B cell (primary cell): ENCODE measurements at regions of chr17 and their contacts with region 1.

Region 1: DNA sequence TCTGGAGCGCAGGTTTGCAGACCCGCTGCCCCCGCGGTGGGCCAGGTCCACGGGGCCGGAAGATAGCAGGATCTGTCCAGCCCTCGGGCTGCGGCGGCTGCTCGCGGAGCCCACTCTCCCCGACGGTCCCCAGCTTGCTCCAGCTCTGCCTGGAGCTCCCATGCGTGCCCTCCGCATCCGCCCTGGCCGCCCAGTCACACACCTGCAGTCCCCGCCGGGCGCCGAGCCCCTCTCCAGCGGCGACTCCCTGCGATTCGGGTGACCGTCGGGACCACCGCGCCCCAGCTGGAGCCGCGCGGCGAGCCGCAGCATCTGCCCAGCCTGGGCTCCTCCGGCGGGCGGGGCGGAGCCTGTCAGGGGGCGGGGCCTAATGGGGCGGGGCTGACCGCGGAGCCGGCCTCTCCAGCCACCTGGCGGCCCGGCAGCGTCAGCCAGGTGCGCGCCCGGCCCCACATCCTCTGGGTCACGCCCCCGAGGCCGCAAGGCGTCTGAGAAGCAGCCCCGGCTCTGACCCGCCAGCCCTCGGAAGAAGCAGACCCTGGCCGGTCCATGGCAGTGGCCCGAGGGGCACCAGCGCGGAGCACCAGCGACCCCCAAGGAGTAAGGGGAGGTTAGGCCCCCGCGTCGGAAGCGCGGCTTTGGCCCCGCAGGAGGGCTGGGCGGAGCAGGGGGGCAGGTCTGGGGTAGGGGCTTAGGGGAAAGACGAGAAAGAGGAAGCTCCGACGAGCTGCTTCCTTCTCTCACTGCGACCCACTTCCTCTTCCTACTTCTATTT is at the start of gene PIK3R5:
- DNase-seq: peak; percentile 98
- ATAC-seq: peak; percentile 90
- H3K4me3 ChIP-seq: peak within 1 kb of the TSS; percentile 59 to 93 (median 84)
- H3K4me3 Mint-ChIP-seq: peak within 1 kb of the TSS; percentile 95
- H3K27ac ChIP-seq: peak within 1 kb of the TSS; percentile 93 to 97
- H3K27ac Mint-ChIP-seq: peak within 1 kb of the TSS; percentile 94
- H3K4me1 ChIP-seq: peaks cover 43 to 56% of the 10 kb centered on the region in 2 donors
- H3K4me1 Mint-ChIP-seq: peaks cover 54% of the 10 kb centered on the region
- H3K27me3 ChIP-seq: no peaks in the 10 kb centered on the region
- H3K27me3 Mint-ChIP-seq: no peaks in the 10 kb centered on the region
- CTCF ChIP-seq: peak; percentile 28
- total RNA-seq, gene PIK3R5: 69.9 and 70.0 TPM in 2 replicates

Region 2: GRCh38 chr17:8798846-8799569 is 166.6 kb before region 1 on chr17 and contains the start of gene MFSD6L:
- CTCF ChIA-PET with region 1: interaction called, 11 read pairs
- POLR2A ChIA-PET with region 1: no interaction called
- intact Hi-C with region 1: no loop called
- DNase-seq: peak; percentile 67
- ATAC-seq: peak; percentile 73
- H3K4me3 ChIP-seq: no peak within 1 kb of the TSS
- H3K4me3 Mint-ChIP-seq: no peak within 1 kb of the TSS
- H3K27ac ChIP-seq: no peak within 1 kb of the TSS
- H3K27ac Mint-ChIP-seq: no peak within 1 kb of the TSS
- H3K4me1 ChIP-seq: peaks cover 0 to 3% of the 10 kb centered on the region in 2 donors
- H3K4me1 Mint-ChIP-seq: peaks cover 12% of the 10 kb centered on the region
- H3K27me3 ChIP-seq: no peaks in the 10 kb centered on the region
- H3K27me3 Mint-ChIP-seq: no peaks in the 10 kb centered on the region
- CTCF ChIP-seq: peak; percentile 40
- total RNA-seq, gene MFSD6L: 0.22 and 0.37 TPM in 2 replicates

Region 3: DNA sequence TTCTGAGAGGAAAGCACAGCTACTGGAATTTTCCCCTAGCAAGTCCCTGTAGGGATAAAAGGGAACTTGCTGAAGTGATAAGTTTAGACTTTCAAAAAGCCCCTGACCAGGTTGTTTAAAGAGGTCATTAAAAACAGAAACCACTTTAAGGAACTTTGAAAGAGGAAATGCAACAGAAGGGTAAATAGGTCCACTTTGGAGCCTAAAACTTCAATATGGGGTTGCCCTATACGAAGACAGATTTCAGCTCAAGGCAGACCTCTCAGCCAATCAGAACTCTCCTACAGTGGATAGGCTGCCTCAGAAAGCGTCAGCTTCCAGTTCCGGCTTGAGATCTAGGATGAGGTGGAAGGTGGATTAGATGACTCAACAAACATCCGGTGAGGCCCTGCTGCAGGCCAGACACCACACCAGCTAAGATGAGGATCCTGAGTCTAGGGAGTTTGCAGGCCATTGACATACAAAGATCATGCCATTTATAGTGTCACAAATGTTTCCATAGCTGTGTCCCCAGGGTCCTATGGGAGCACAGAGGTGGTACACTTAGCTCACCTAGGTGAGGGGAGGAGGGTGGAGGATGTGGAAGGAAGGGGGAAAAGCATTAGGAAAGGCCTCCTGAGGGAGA is 158.5 kb before region 1 on chr17:
- CTCF ChIA-PET with region 1: interaction called, 4 read pairs
- POLR2A ChIA-PET with region 1: interaction called, 10 read pairs
- intact Hi-C with region 1: no loop called
- DNase-seq: peak; percentile 88
- ATAC-seq: peak; percentile 89
- H3K4me3 ChIP-seq: peak overlapping the region in 2 of 5 experiments; percentile 10 to 26
- H3K4me3 Mint-ChIP-seq: peak overlapping the region; percentile 76
- H3K27ac ChIP-seq: peak overlapping the region; percentile 95 to 97
- H3K27ac Mint-ChIP-seq: peak overlapping the region; percentile 95
- H3K4me1 ChIP-seq: peaks cover 36 to 42% of the 10 kb centered on the region in 2 donors
- H3K4me1 Mint-ChIP-seq: peaks cover 44% of the 10 kb centered on the region
- H3K27me3 ChIP-seq: no peaks in the 10 kb centered on the region
- H3K27me3 Mint-ChIP-seq: peaks cover 4% of the 10 kb centered on the region
- CTCF ChIP-seq: no peak

Region 4: DNA sequence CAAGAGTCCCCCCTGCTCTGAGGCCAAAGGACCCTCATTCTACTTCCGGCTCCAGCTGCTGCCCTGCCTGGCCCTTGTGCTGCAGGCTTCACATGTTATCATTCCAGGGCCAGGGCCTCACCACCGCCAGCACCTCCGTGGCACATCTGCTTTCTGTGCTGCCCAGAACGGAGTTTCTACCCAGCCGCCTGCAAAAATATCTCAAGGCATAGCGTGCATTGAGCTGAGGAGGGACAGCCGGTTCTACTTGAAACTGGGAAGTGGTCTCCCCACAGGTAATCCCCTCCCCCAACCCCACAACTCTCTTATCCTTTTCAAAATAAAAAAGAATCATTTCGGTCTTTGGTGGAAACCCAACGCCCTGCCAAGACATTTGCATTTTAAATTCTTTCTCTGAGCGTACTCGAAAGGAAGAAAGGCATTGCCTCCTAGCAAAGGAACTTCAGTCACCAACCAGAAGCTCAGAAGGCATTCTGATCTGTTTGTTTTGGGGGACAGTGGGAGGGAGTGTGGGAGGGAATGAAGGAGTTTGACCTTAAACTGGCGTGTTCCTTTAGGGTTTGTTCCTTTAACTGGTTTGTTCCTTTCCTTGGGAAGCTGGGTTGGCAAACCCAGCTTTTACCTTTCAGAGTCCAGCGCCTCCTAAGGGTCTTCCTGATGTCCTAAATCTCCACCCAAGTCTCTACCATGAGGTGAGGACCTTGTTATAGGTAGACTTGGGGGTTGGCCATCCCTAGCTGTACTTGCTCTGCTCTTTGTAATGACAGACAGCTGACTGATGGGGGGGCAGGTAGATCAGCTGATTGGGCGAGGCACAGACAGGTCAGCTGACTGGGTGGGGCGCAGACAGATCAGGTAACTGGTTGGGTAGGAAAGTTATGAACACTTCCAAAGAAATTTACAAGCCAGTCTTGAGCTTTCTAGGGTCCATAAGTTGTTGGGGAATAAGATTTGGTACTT is 64.7 kb before region 1 on chr17:
- CTCF ChIA-PET with region 1: interaction called, 13 read pairs
- POLR2A ChIA-PET with region 1: interaction called, 7 read pairs
- intact Hi-C with region 1: loop called (anchors 1 kb)
- DNase-seq: peak; percentile 60
- ATAC-seq: peak; percentile 22
- H3K4me3 ChIP-seq: peak overlapping the region in 1 of 5 experiments; percentile 6
- H3K4me3 Mint-ChIP-seq: peak overlapping the region; percentile 63
- H3K27ac ChIP-seq: peak overlapping the region; percentile 56 to 81
- H3K27ac Mint-ChIP-seq: peak overlapping the region; percentile 86
- H3K4me1 ChIP-seq: peaks cover 48 to 54% of the 10 kb centered on the region in 2 donors
- H3K4me1 Mint-ChIP-seq: peaks cover 60% of the 10 kb centered on the region
- H3K27me3 ChIP-seq: no peaks in the 10 kb centered on the region
- H3K27me3 Mint-ChIP-seq: no peaks in the 10 kb centered on the region
- CTCF ChIP-seq: no peak

Region 5: GRCh38 chr17:8941520-8941919 is 24.1 kb before region 1 on chr17:
- CTCF ChIA-PET with region 1: interaction called, 6 read pairs
- POLR2A ChIA-PET with region 1: interaction called, 18 read pairs
- intact Hi-C with region 1: no loop called
- DNase-seq: peak; percentile 60
- ATAC-seq: peak; percentile 65
- H3K4me3 ChIP-seq: peak overlapping the region in 3 of 5 experiments; percentile 0 to 24 (median 18)
- H3K4me3 Mint-ChIP-seq: peak overlapping the region; percentile 81
- H3K27ac ChIP-seq: peak overlapping the region; percentile 60 to 69
- H3K27ac Mint-ChIP-seq: peak overlapping the region; percentile 91
- H3K4me1 ChIP-seq: peaks cover 29 to 47% of the 10 kb centered on the region in 2 donors
- H3K4me1 Mint-ChIP-seq: peaks cover 53% of the 10 kb centered on the region
- H3K27me3 ChIP-seq: no peaks in the 10 kb centered on the region
- H3K27me3 Mint-ChIP-seq: no peaks in the 10 kb centered on the region
- CTCF ChIP-seq: no peak

Region 6: GRCh38 chr17:8954339-8954738 is 11.2 kb before region 1 on chr17:
- CTCF ChIA-PET with region 1: interaction called, 23 read pairs
- POLR2A ChIA-PET with region 1: interaction called, 22 read pairs
- intact Hi-C with region 1: loop called (anchors 1 kb)
- DNase-seq: peak; percentile 88
- ATAC-seq: peak; percentile 99
- H3K4me3 ChIP-seq: peak overlapping the region in 3 of 5 experiments; percentile 8 to 31 (median 22)
- H3K4me3 Mint-ChIP-seq: peak overlapping the region; percentile 87
- H3K27ac ChIP-seq: peak overlapping the region; percentile 76 to 84
- H3K27ac Mint-ChIP-seq: peak overlapping the region; percentile 97
- H3K4me1 ChIP-seq: peaks cover 53 to 74% of the 10 kb centered on the region in 2 donors
- H3K4me1 Mint-ChIP-seq: peaks cover 85% of the 10 kb centered on the region
- H3K27me3 ChIP-seq: no peaks in the 10 kb centered on the region
- H3K27me3 Mint-ChIP-seq: no peaks in the 10 kb centered on the region
- CTCF ChIP-seq: no peak